Activated T-helper 2 cell treated with anti-CD3 and anti-CD28 coated beads, Interferon-gamma antibody, Interleukin-2, Interleukin-4, amounts not matched to agents 10 μg/mL and 5 μg/mL and 100 μg/mL, durations not matched to agents 14 hours and 24 hours and 36 hours (primary cell): ENCODE measurements at regions of chr3 and their contacts with region 1.

Region 1: GRCh38 chr3:197224034-197224444 is 74.4 kb downstream of the DLG1 start:
- DNase-seq: no peak
- H3K4me3 Mint-ChIP-seq: no peak overlapping the region
- H3K27ac Mint-ChIP-seq: no peak overlapping the region
- H3K4me1 Mint-ChIP-seq: peaks cover 17% of the 10 kb centered on the region
- H3K27me3 Mint-ChIP-seq: no peaks in the 10 kb centered on the region

Region 2: DNA sequence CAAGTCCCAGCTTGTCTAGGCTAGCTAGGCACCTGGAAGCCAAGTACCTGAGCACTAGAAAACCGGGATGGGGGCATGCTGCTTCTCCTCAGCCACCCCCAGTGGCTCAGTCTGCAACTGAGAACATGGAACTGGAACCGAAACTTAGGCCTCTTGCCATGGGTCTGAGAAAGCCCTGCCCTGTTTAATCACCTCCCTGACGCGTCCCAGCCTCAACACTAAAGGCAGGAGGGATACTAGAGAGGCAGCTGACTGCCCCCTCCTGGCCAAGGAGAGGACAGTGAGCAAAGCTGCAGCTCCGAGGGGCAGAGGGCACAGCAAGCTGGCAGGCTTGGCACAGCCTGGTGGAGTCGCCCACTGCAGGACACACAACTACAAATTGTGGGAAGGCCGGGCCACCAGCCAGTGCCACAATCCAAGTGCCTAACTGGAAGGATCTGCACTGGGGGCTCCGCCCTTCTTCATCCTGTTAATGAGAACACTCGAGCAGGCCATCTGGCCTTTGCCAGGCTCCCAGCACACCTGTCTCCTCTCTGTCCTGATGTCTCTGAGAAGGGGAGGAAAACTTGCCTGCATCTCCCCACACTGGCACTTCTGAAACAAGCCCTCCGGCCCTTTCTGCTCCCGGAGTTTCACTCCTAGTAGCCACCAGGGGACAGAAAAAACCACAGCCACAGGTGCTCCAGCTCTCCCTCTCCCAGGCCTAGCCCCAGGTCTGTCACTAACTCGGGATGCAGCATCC is 278.0 kb after region 1 on chr3:
- intact Hi-C with region 1: loop called (anchors 2 kb)
- DNase-seq: peak; percentile 31
- H3K4me3 Mint-ChIP-seq: no peak overlapping the region
- H3K27ac Mint-ChIP-seq: no peak overlapping the region
- H3K4me1 Mint-ChIP-seq: no peaks in the 10 kb centered on the region
- H3K27me3 Mint-ChIP-seq: no peaks in the 10 kb centered on the region

Region 3: GRCh38 chr3:197510642-197511018 is 286.6 kb after region 1 on chr3:
- intact Hi-C with region 1: loop called (anchors 1 kb)
- DNase-seq: no peak
- H3K4me3 Mint-ChIP-seq: no peak overlapping the region
- H3K27ac Mint-ChIP-seq: no peak overlapping the region
- H3K4me1 Mint-ChIP-seq: peaks cover 6% of the 10 kb centered on the region
- H3K27me3 Mint-ChIP-seq: no peaks in the 10 kb centered on the region